ENCODE measurements at regions of chr14 and their contacts with region 1.

Region 1: GRCh38 chr14:23301288-23301968 is 1.2 kb downstream of the PPP1R3E start:
- DNase-seq: peak; percentile 100
- ATAC-seq: peak; percentile 75
- H3K4me3 ChIP-seq: peak overlapping the region in 4 of 5 experiments; percentile 72 to 86 (median 82)
- H3K4me3 Mint-ChIP-seq: peak overlapping the region; percentile 98
- H3K27ac ChIP-seq: peak overlapping the region; percentile 95 to 96
- H3K27ac Mint-ChIP-seq: peak overlapping the region; percentile 95
- H3K4me1 ChIP-seq: peaks cover 24 to 26% of the 10 kb centered on the region in 2 donors
- H3K4me1 Mint-ChIP-seq: peaks cover 34% of the 10 kb centered on the region
- H3K27me3 ChIP-seq: no peaks in the 10 kb centered on the region
- H3K27me3 Mint-ChIP-seq: no peaks in the 10 kb centered on the region
- CTCF ChIP-seq: peak; percentile 81

Region 2: DNA sequence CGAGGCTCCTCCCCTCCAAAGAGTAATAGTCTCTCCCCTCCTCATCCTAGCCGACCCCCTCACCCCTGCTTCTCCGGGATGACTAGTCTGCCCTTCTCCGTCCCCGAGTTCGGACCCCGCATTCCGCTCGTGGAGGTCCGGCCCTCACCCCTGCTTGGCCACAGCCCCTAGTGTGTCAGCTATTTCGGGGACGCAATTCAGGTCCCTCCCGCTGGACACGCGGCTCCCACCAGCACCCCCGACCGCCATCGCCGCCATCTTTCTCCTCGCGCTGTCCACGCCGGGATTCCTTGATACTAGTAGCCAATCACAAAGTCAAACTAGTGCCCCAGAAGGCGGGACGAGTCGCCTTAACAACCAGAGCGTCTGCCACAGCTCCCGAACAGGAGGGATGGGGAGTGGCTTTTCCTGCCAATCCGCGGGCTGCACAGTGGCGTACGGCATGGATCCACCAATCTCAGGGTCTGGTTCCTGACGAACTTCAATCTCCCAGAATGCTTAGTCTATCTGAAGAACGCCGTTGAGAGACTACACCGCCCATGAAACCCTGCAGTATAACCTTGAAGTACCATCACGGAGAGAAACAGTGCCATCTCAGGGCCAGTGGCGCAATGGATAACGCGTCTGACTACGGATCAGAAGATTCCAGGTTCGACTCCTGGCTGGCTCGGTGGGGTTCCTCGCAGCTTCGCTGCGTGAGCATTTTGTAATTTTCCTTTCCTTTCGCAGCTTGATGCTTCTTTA is 372.2 kb before region 1 on chr14 and contains the start of gene PRMT5:
- CTCF ChIA-PET with region 1: no interaction called
- POLR2A ChIA-PET with region 1: no interaction called
- intact Hi-C with region 1: loop called (anchors 5 kb)
- DNase-seq: peak; percentile 100
- ATAC-seq: peak; percentile 94
- H3K4me3 ChIP-seq: peak within 1 kb of the TSS; percentile 64 to 100 (median 96)
- H3K4me3 Mint-ChIP-seq: no peak within 1 kb of the TSS
- H3K27ac ChIP-seq: peak within 1 kb of the TSS; percentile 65 to 86
- H3K27ac Mint-ChIP-seq: no peak within 1 kb of the TSS
- H3K4me1 ChIP-seq: peaks cover 13 to 23% of the 10 kb centered on the region in 2 donors
- H3K4me1 Mint-ChIP-seq: peaks cover 26% of the 10 kb centered on the region
- H3K27me3 ChIP-seq: no peaks in the 10 kb centered on the region
- H3K27me3 Mint-ChIP-seq: no peaks in the 10 kb centered on the region
- CTCF ChIP-seq: no peak
- total RNA-seq, gene PRMT5: 38.8 and 48.6 TPM in 2 replicates

Region 3: GRCh38 chr14:23120541-23121251 is 180.7 kb before region 1 on chr14:
- CTCF ChIA-PET with region 1: interaction called, 21 read pairs
- POLR2A ChIA-PET with region 1: interaction called, 7 read pairs
- intact Hi-C with region 1: loop called (anchors 1 kb)
- DNase-seq: peak; percentile 89
- ATAC-seq: peak; percentile 95
- H3K4me3 ChIP-seq: peak overlapping the region in 4 of 5 experiments; percentile 27 to 36 (median 30)
- H3K4me3 Mint-ChIP-seq: peak overlapping the region; percentile 79
- H3K27ac ChIP-seq: peak overlapping the region; percentile 72 to 88
- H3K27ac Mint-ChIP-seq: peak overlapping the region; percentile 89
- H3K4me1 ChIP-seq: peaks cover 32 to 35% of the 10 kb centered on the region in 2 donors
- H3K4me1 Mint-ChIP-seq: peaks cover 34% of the 10 kb centered on the region
- H3K27me3 ChIP-seq: no peaks in the 10 kb centered on the region
- H3K27me3 Mint-ChIP-seq: peaks cover 7% of the 10 kb centered on the region
- CTCF ChIP-seq: peak; percentile 99

Region 4: GRCh38 chr14:23320774-23321571 is 19.5 kb after region 1 on chr14 and contains the start of gene PABPN1:
- CTCF ChIA-PET with region 1: interaction called, 56 read pairs
- POLR2A ChIA-PET with region 1: interaction called, 84 read pairs
- intact Hi-C with region 1: loop called (anchors 1 kb)
- DNase-seq: peak; percentile 100
- ATAC-seq: peak; percentile 84
- H3K4me3 ChIP-seq: peak within 1 kb of the TSS; percentile 61 to 89 (median 79)
- H3K4me3 Mint-ChIP-seq: peak within 1 kb of the TSS; percentile 93
- H3K27ac ChIP-seq: peak within 1 kb of the TSS; percentile 91 to 99
- H3K27ac Mint-ChIP-seq: peak within 1 kb of the TSS; percentile 99
- H3K4me1 ChIP-seq: peaks cover 21 to 24% of the 10 kb centered on the region in 2 donors
- H3K4me1 Mint-ChIP-seq: peaks cover 33% of the 10 kb centered on the region
- H3K27me3 ChIP-seq: no peaks in the 10 kb centered on the region
- H3K27me3 Mint-ChIP-seq: no peaks in the 10 kb centered on the region
- CTCF ChIP-seq: no peak
- total RNA-seq, gene PABPN1: 280 and 293 TPM in 2 replicates

Region 5: GRCh38 chr14:23335623-23336022 is 34.2 kb after region 1 on chr14:
- CTCF ChIA-PET with region 1: no interaction called
- POLR2A ChIA-PET with region 1: no interaction called
- intact Hi-C with region 1: no loop called
- DNase-seq: no peak
- ATAC-seq: no peak
- H3K4me3 ChIP-seq: no peak overlapping the region
- H3K4me3 Mint-ChIP-seq: no peak overlapping the region
- H3K27ac ChIP-seq: no peak overlapping the region
- H3K27ac Mint-ChIP-seq: no peak overlapping the region
- H3K4me1 ChIP-seq: no peaks in the 10 kb centered on the region
- H3K4me1 Mint-ChIP-seq: no peaks in the 10 kb centered on the region
- H3K27me3 ChIP-seq: peaks cover 0 to 7% (median 4%) of the 10 kb centered on the region in 4 experiments
- H3K27me3 Mint-ChIP-seq: peaks cover 39% of the 10 kb centered on the region
- CTCF ChIP-seq: no peak

Region 6: GRCh38 chr14:23409475-23409874 is 108.0 kb after region 1 on chr14:
- CTCF ChIA-PET with region 1: no interaction called
- POLR2A ChIA-PET with region 1: no interaction called
- intact Hi-C with region 1: no loop called
- DNase-seq: no peak
- ATAC-seq: no peak
- H3K4me3 ChIP-seq: no peak overlapping the region
- H3K4me3 Mint-ChIP-seq: no peak overlapping the region
- H3K27ac ChIP-seq: no peak overlapping the region
- H3K27ac Mint-ChIP-seq: no peak overlapping the region
- H3K4me1 ChIP-seq: peaks cover 4 to 12% of the 10 kb centered on the region in 2 donors
- H3K4me1 Mint-ChIP-seq: peaks cover 18% of the 10 kb centered on the region
- H3K27me3 ChIP-seq: peaks cover 0 to 34% (median 15%) of the 10 kb centered on the region in 4 experiments
- H3K27me3 Mint-ChIP-seq: peaks cover 73% of the 10 kb centered on the region
- CTCF ChIP-seq: no peak

Region 7: DNA sequence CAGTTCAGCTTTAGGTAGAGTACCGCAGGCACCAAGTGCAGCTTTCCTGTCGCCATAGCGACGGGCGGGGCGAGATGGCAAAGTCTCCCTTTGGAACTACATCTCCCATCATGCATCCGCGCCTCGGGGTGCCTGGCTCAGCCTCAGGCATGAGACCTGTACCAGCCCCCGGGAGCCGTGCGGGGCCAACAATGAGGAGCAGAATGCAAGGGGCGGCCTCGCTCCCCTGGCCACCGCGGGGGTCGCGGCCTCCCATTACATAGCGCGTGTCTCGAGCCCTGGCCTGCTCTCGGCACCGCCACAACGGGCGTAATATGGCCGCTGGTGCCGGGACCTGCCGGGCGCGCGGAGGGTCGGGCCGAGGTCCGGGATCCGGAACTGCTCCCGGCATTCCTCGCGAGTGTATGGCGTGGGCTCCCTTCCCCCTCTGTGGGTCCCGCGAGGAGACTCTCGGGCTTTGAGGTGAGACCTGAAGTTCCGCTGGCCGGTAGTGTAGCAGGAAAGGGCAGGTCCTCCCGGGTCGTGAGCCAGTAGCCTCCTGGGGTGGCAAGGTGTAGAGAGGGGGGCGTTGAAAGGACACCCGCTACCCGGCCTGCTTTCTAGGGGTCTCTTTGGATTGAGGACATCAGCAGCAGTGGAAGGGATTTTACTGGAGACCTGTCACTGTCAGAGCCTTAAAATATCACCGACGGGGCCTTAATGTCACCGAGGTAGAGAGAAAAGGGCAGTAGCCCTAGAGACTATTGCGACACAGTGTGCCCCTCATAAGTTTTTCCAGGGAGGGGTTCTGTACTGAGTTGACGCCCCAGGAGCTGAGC is 254.7 kb after region 1 on chr14 and contains the start of gene THTPA:
- CTCF ChIA-PET with region 1: no interaction called
- POLR2A ChIA-PET with region 1: no interaction called
- intact Hi-C with region 1: loop called (anchors 5 kb)
- DNase-seq: peak; percentile 96
- ATAC-seq: peak; percentile 78
- H3K4me3 ChIP-seq: peak within 1 kb of the TSS; percentile 17 to 97 (median 81)
- H3K4me3 Mint-ChIP-seq: peak within 1 kb of the TSS; percentile 98
- H3K27ac ChIP-seq: peak within 1 kb of the TSS; percentile 69 to 84
- H3K27ac Mint-ChIP-seq: peak within 1 kb of the TSS; percentile 99
- H3K4me1 ChIP-seq: peaks cover 19 to 36% of the 10 kb centered on the region in 2 donors
- H3K4me1 Mint-ChIP-seq: peaks cover 45% of the 10 kb centered on the region
- H3K27me3 ChIP-seq: no peaks in the 10 kb centered on the region
- H3K27me3 Mint-ChIP-seq: no peaks in the 10 kb centered on the region
- CTCF ChIP-seq: no peak
- total RNA-seq, gene THTPA: 21.4 and 21.5 TPM in 2 replicates

Region 8: DNA sequence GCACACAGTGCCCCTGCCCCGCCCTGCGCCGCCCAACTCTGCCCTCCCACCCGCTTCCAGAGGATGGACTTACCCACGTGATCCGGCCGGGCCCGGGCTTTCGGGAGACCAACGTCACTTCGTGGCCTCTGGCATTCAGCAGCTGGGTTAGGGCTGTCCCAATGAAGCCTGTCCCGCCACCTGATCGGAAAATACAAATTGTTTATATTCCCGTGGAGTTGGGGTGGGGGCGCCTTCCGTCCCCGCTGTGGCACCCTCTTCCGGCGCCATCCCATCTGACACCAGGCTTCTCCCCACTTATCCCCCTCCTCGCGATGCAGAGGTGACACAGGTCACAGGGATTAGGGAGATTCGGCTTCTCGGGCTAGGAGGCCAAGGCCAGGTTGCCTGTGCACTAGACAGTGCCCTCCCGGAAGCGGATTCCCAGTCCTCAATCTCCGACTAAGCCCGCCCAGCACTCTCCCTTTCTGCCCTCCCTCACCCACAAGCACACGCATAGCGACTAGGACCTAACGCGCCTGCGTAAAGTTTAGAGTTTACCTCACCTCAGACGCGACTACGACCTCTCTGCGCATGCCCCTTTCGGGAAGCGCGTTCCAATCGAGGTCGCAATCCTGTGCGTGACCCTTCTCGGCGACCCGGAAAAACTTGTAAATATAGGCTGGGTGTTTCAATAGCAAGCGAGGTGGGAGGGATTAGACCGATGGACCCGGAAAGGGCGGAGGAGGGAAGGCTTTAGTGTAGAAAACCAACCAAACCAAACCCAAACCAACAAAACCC is 1141.0 kb after region 1 on chr14 and contains the start of gene SDR39U1:
- CTCF ChIA-PET with region 1: no interaction called
- POLR2A ChIA-PET with region 1: no interaction called
- intact Hi-C with region 1: loop called (anchors 2 kb)
- DNase-seq: peak; percentile 99
- ATAC-seq: peak; percentile 89
- H3K4me3 ChIP-seq: peak within 1 kb of the TSS; percentile 86 to 98 (median 94)
- H3K4me3 Mint-ChIP-seq: peak within 1 kb of the TSS; percentile 97
- H3K27ac ChIP-seq: peak within 1 kb of the TSS; percentile 96
- H3K27ac Mint-ChIP-seq: peak within 1 kb of the TSS; percentile 98
- H3K4me1 ChIP-seq: peaks cover 20 to 29% of the 10 kb centered on the region in 2 donors
- H3K4me1 Mint-ChIP-seq: peaks cover 48% of the 10 kb centered on the region
- H3K27me3 ChIP-seq: no peaks in the 10 kb centered on the region
- H3K27me3 Mint-ChIP-seq: no peaks in the 10 kb centered on the region
- CTCF ChIP-seq: no peak
- total RNA-seq, gene SDR39U1: 107 and 126 TPM in 2 replicates